ENCODE measurements at regions of chr19 and their contacts with region 1.

Region 1: DNA sequence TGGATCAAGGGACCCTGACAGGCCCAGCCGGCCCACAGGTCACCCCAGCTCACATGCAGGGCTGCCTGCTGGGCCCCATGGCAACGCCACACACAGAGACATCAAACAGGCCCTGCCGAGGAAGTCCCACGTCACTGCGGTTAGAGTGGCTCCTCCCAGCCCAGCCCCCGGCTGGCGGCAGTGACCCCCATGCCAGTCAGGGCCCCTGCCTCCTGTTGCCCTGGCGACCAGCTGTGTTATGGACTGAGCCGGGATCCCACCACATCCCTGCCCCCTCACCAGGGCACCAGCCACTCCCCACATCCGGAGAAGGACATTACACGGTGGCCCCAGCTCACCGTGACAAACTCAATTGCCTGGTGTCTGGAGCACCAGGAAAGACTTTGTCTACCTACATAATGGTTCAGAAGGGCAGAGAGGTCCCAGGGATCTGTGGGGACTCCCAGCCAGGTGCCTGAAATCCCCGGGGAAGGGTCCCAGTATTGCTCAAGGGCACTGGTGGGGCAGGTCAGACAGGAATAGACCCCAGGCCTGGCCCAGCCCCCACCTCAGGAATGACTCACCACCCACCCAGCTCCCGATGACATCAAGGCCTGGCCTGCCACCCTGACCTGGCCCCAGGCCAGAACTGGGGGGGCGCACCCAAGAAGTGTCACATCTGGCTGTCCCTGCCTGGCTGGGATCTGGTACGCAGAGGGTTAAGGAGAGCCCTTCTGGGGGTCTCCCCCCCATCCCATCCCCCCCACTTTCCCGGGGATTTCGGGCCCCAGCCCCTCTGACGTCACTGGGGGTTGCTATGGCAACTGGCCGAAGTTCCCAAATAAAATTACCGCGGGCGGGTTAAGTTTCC is 30.2 kb upstream of the NANOS3 start:
- DNase-seq: peak; percentile 99
- H3K4me3 ChIP-seq: peak overlapping the region; percentile 50 to 79
- H3K4me3 Mint-ChIP-seq: peak overlapping the region; percentile 83 to 98 (median 90)
- H3K27ac ChIP-seq: peak overlapping the region; percentile 99
- H3K27ac Mint-ChIP-seq: peak overlapping the region; percentile 99 to 100 (median 100)
- H3K4me1 ChIP-seq: peaks cover 69% of the 10 kb centered on the region
- H3K4me1 Mint-ChIP-seq: peaks cover 33 to 77% (median 50%) of the 10 kb centered on the region in 4 donors
- H3K27me3 ChIP-seq: no peaks in the 10 kb centered on the region
- H3K27me3 Mint-ChIP-seq: peaks cover 0 to 4% of the 10 kb centered on the region in 2 donors

Region 2: GRCh38 chr19:13637664-13638063 is 209.1 kb before region 1 on chr19:
- CTCF ChIA-PET with region 1: no interaction called
- POLR2A ChIA-PET with region 1: no interaction called
- intact Hi-C with region 1: no loop called
- DNase-seq: no peak
- H3K4me3 ChIP-seq: no peak overlapping the region
- H3K4me3 Mint-ChIP-seq: no peak overlapping the region
- H3K27ac ChIP-seq: no peak overlapping the region
- H3K27ac Mint-ChIP-seq: no peak overlapping the region
- H3K4me1 ChIP-seq: no peaks in the 10 kb centered on the region
- H3K4me1 Mint-ChIP-seq: peaks cover 0 to 1% (median 0%) of the 10 kb centered on the region in 4 donors
- H3K27me3 ChIP-seq: no peaks in the 10 kb centered on the region
- H3K27me3 Mint-ChIP-seq: peaks cover 14 to 19% of the 10 kb centered on the region in 2 donors

Region 3: DNA sequence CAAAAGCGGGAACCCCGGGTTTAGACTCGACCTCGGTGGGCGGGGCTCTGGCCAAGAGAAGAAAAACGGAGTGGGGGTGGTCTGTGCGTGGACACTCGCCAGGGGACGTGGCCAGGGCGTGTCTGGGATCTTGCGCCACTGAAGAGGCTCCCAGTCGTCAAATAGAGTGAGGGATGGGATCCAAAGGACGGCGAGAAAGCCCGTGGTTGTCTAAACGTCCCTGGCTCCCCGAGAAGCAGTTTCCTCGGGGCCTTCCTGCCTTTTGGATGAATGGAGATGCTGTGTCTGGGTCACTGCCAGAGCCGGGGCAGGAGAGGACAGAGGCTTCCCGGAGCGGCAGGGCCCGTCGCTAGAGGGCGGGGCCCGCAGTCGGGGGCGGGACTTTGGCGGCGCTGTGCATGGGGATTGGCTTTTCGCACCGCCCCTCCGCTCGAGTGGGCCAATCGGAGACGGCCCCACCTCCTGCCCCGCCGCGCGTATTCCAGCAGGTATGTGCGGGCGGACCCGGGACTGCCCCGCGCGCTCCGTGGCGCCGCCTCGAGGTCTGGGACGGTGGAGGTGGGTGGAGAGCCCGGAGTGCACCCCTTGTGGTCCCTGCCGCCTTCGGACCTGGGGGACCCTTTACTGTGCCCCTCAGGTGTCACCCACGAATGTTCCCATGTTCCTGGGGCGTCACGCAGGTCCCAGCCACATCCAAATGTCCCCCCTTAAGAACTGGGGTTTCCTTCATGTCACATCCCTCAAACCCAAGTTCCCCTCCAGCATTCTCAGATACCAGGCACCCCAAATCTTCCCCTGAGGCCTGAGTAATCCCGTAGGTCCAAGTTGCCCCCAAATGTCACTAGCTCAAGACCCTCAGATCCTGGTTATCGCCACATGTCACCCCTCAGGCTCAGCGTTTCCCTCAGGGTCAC is 13.2 kb before region 1 on chr19:
- CTCF ChIA-PET with region 1: interaction called, 12 read pairs
- POLR2A ChIA-PET with region 1: interaction called, 204 read pairs
- intact Hi-C with region 1: loop called (anchors 1 kb)
- DNase-seq: peak; percentile 90 to 94 (median 91)
- H3K4me3 ChIP-seq: peak overlapping the region; percentile 36 to 47
- H3K4me3 Mint-ChIP-seq: peak overlapping the region; percentile 83 to 88 (median 86)
- H3K27ac ChIP-seq: peak overlapping the region; percentile 92
- H3K27ac Mint-ChIP-seq: peak overlapping the region; percentile 96 to 100 (median 97)
- H3K4me1 ChIP-seq: peaks cover 49% of the 10 kb centered on the region
- H3K4me1 Mint-ChIP-seq: peaks cover 17 to 50% (median 30%) of the 10 kb centered on the region in 4 donors
- H3K27me3 ChIP-seq: no peaks in the 10 kb centered on the region
- H3K27me3 Mint-ChIP-seq: no peaks in the 10 kb centered on the region

Region 4: GRCh38 chr19:13986348-13986904 is 139.6 kb after region 1 on chr19:
- CTCF ChIA-PET with region 1: no interaction called
- POLR2A ChIA-PET with region 1: no interaction called
- intact Hi-C with region 1: no loop called
- DNase-seq: peak; percentile 96 to 100 (median 98)
- H3K4me3 ChIP-seq: peak overlapping the region; percentile 43 to 49
- H3K4me3 Mint-ChIP-seq: peak overlapping the region; percentile 69 to 93 (median 74)
- H3K27ac ChIP-seq: peak overlapping the region; percentile 95
- H3K27ac Mint-ChIP-seq: peak overlapping the region; percentile 95 to 100 (median 98)
- H3K4me1 ChIP-seq: peaks cover 84% of the 10 kb centered on the region
- H3K4me1 Mint-ChIP-seq: peaks cover 35 to 93% (median 65%) of the 10 kb centered on the region in 4 donors
- H3K27me3 ChIP-seq: no peaks in the 10 kb centered on the region
- H3K27me3 Mint-ChIP-seq: no peaks in the 10 kb centered on the region

Region 5: DNA sequence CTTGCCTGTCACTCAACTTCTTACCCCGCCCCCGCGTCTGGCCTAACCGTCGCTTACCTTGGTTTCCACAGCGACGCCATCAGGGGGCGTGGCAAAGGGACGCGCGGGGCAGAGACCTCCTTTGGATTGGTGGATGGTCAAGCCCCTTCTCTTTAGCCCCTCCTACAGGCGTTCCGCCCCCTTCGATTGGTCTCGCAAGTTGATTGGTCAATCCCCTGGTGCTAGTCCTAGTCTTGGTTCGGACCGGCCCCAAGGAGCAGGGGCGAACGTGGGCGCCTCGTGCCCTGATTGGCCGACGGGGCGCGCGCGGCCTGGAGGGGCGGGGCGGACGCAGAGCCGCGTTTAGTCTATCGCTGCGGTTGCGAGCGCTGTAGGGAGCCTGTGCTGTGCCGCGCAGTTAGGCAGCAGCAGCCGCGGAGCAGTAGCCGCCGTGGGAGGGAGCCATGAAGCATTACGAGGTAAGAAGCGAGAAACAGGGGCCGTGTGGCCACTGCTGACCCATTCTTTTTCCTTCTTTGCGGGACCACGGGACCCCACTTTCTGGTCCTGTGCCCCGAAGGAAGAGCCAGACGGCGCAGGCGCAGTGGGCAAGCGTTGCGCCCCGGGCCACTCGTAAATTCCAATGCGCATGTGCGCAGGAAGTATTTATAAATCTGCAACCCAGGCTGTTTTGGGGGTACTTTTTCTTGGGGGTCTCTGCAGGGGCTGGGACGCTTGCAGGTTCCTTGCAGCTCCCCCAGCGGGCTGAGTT is 682.6 kb after region 1 on chr19 and contains the start of gene TECR:
- CTCF ChIA-PET with region 1: no interaction called
- POLR2A ChIA-PET with region 1: no interaction called
- intact Hi-C with region 1: loop called (anchors 10 kb)
- DNase-seq: peak; percentile 100
- H3K4me3 ChIP-seq: peak within 1 kb of the TSS; percentile 99 to 100
- H3K4me3 Mint-ChIP-seq: peak within 1 kb of the TSS; percentile 89 to 96 (median 94)
- H3K27ac ChIP-seq: peak within 1 kb of the TSS; percentile 88
- H3K27ac Mint-ChIP-seq: peak within 1 kb of the TSS; percentile 98 to 100 (median 99)
- H3K4me1 ChIP-seq: peaks cover 47% of the 10 kb centered on the region
- H3K4me1 Mint-ChIP-seq: peaks cover 17 to 65% (median 44%) of the 10 kb centered on the region in 4 donors
- H3K27me3 ChIP-seq: no peaks in the 10 kb centered on the region
- H3K27me3 Mint-ChIP-seq: no peaks in the 10 kb centered on the region
- total RNA-seq, gene TECR: 189 to 194 TPM